CD8-positive, alpha-beta memory T cell (primary cell): ENCODE measurements at regions of chr16 and their contacts with region 1.

Region 1: DNA sequence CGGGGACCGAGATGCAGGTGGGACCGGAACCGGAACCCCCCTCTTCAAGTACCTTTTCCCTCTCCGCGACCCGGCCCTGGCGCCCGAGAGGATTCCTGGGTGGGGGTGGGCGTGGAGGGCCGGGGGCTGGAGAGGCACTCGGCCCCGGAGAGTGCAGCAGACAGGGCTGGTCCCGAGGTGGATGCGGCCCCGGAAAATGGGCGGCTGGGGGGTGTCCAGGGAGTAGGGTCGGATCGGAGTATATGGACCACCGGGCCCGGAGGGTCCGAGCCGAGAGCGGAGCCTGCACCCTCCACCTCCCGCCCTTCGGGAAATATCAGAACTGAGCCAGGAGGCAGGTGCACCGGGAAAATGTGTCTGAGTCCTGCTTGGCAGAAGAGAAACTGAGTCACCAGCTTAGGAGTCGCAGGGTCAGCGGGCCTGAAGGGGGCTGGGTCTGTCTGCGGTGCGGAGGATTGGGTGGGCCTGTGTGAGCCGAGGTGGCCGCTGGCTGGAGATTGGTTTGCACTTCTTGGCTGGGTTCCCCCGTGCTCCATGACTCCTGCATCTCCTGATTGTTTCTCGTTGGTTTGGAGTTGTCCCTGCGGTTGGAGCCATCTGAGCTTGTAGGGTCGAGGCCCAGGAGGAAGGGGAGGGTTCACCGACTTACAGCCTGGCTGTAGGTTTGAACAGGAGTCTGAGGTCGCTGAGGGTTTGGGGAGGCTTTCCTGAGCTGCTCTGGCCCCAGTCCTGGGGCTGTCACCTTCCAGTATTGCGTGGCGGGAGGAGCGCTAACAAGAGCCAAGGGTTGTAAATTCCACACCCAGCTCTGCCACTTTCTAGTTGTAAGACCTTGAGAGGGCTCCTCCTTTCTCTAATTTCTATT is 518 bp downstream of the SH2B1 start:
- DNase-seq: peak in 4 of 5 donors; percentile 22 to 34 (median 28)
- H3K4me3 ChIP-seq: peak overlapping the region; percentile 99
- H3K4me3 Mint-ChIP-seq: peak overlapping the region; percentile 98 to 99 (median 99)
- H3K27ac ChIP-seq: peak overlapping the region; percentile 96
- H3K27ac Mint-ChIP-seq: peak overlapping the region; percentile 93 to 99 (median 98)
- H3K4me1 ChIP-seq: peaks cover 14% of the 10 kb centered on the region
- H3K4me1 Mint-ChIP-seq: peaks cover 22 to 48% (median 23%) of the 10 kb centered on the region in 3 donors
- H3K27me3 ChIP-seq: no peaks in the 10 kb centered on the region
- H3K27me3 Mint-ChIP-seq: peaks cover 0 to 2% of the 10 kb centered on the region in 2 donors

Region 2: DNA sequence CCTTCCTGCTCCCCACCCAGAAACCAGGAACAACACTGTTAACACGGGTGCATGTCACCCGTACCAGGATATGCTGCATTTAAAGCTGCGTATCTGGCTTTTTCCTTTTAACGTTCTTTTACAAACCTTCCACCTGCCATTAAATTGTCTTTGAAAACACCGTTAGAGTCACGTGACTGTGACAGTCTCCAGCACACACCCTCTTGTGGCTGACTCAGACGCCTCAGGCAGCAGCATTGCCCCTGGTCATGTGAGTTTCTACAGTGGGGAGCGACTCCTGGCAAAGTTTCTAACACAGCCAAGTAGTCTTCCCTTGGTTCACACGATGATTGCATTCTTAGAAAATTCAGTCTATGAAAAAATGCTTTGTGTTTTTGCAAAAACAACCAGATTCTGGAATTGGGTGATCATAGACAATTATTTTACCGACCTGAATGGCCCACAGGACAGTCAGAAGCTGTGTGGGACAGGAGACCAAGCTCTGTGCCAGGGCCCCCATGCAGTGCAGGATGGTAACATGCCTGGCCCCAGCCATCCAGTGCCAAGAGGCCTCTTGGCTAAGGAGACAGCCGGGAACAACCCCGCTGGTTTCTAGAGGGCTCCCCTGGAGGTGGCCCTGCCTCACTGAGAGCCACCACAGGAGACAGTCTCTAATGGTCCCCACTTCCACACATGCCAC is 1115.2 kb before region 1 on chr16:
- CTCF ChIA-PET with region 1: no interaction called
- POLR2A ChIA-PET with region 1: no interaction called
- DNase-seq: peak in 1 of 5 donors; percentile 22
- H3K4me3 ChIP-seq: no peak overlapping the region
- H3K4me3 Mint-ChIP-seq: peak overlapping the region in 3 of 7 donors; percentile 5 to 22 (median 9)
- H3K27ac ChIP-seq: no peak overlapping the region
- H3K27ac Mint-ChIP-seq: peak overlapping the region in 2 of 8 donors; percentile 34 to 58
- H3K4me1 ChIP-seq: peaks cover 10% of the 10 kb centered on the region
- H3K4me1 Mint-ChIP-seq: peaks cover 4 to 14% (median 10%) of the 10 kb centered on the region in 3 donors
- H3K27me3 ChIP-seq: no peaks in the 10 kb centered on the region
- H3K27me3 Mint-ChIP-seq: no peaks in the 10 kb centered on the region

Region 3: DNA sequence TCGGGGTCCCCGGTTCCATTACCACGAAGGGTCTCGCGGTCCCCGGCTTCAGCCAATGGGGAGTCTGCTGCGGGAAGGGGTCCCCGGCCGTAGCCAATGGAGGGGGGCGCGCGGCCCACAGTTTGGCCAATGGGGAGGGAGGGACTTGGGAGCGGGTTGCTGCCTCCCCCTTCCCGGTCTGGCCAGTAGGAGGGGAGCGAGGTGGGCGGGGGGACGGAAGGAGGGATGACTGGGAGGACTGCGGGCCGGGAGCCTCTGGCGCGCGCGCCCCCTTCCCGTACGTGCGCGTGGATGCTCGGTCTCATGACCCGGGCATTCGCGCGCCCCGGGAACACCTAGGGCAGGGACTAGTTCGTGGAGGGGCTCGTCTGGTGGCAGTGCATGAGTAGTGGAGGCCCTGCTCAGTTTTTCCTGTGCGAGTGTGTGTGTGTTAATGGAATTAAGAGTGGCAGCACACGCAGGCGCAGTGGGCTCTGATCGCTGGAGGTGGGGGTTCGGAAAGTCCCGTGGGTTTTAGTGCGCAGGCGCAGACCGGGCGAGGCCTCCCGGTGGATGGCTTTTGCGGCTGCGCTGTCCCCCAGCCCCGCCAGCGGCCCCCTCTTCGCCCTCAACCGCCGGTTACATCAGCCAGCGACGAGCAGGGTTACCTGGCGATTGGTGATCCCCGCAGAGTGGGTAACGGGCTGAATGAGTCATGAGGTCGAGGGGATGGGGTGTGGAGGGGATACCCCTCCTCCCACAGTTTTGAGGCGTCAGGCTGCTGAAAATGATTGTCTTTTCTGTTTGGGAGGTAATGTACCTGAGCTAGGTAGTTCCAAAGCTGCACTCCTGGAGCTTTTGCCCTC is 40.1 kb before region 1 on chr16:
- CTCF ChIA-PET with region 1: interaction called, 7 read pairs
- POLR2A ChIA-PET with region 1: interaction called, 14 read pairs
- DNase-seq: peak; percentile 94 to 98 (median 94)
- H3K4me3 ChIP-seq: peak overlapping the region; percentile 94
- H3K4me3 Mint-ChIP-seq: peak overlapping the region; percentile 96 to 99 (median 97)
- H3K27ac ChIP-seq: peak overlapping the region; percentile 96
- H3K27ac Mint-ChIP-seq: peak overlapping the region; percentile 98 to 100 (median 99)
- H3K4me1 ChIP-seq: peaks cover 29% of the 10 kb centered on the region
- H3K4me1 Mint-ChIP-seq: peaks cover 34 to 47% (median 35%) of the 10 kb centered on the region in 3 donors
- H3K27me3 ChIP-seq: no peaks in the 10 kb centered on the region
- H3K27me3 Mint-ChIP-seq: peaks cover 0 to 7% of the 10 kb centered on the region in 2 donors

Region 4: GRCh38 chr16:28846080-28846932 is 17.9 kb before region 1 on chr16 and contains the start of gene TUFM:
- CTCF ChIA-PET with region 1: interaction called, 42 read pairs
- POLR2A ChIA-PET with region 1: interaction called, 28 read pairs
- DNase-seq: peak; percentile 96 to 99 (median 98)
- H3K4me3 ChIP-seq: peak within 1 kb of the TSS; percentile 90
- H3K4me3 Mint-ChIP-seq: peak within 1 kb of the TSS; percentile 90 to 95 (median 94)
- H3K27ac ChIP-seq: peak within 1 kb of the TSS; percentile 89
- H3K27ac Mint-ChIP-seq: peak within 1 kb of the TSS; percentile 84 to 99 (median 94)
- H3K4me1 ChIP-seq: peaks cover 26% of the 10 kb centered on the region
- H3K4me1 Mint-ChIP-seq: peaks cover 28 to 41% (median 30%) of the 10 kb centered on the region in 3 donors
- H3K27me3 ChIP-seq: no peaks in the 10 kb centered on the region
- H3K27me3 Mint-ChIP-seq: no peaks in the 10 kb centered on the region
- total RNA-seq, gene TUFM: 320 to 347 TPM

Region 5: DNA sequence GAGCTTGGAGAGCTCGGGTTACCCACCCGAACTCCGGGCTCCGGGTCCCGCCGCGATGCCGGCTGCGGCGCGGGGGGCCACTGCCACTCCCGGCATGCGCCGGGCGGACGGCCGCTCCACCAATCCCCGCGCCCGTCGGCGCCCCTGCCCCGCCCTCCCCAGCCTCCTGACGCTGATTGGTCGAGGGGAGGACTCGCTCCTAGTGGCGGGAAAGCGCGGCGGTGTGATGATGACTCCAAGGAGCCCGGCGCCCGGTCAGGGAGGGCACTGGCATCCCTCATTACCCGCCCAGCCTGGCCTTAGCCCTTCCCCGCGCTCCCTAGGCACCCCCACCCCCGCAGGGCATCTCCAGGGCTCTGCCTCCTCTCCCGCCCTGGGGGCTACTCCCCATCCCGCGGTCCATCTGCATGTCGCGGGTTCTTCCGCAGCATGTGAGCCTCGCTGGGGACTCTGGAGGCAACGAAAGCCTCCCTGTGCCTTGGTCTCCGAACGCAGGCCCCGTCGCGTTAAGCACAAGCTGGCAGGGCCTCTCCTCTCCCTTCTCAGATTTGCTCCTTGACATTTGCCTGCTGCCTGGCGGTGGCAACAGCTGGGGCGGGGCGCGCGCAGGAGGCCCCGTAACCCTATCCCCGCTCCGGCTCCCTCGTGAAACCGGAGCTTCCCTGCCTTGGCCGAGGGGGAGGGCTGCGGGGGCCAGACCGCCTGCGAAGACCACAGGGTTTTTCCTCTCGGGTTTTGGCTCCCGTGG is 15.9 kb after region 1 on chr16:
- CTCF ChIA-PET with region 1: interaction called, 3 read pairs
- POLR2A ChIA-PET with region 1: interaction called, 15 read pairs
- DNase-seq: peak; percentile 75 to 92 (median 83)
- H3K4me3 ChIP-seq: peak overlapping the region; percentile 87
- H3K4me3 Mint-ChIP-seq: peak overlapping the region; percentile 85 to 95 (median 87)
- H3K27ac ChIP-seq: peak overlapping the region; percentile 61
- H3K27ac Mint-ChIP-seq: peak overlapping the region in 3 of 8 donors; percentile 33 to 55 (median 45)
- H3K4me1 ChIP-seq: peaks cover 14% of the 10 kb centered on the region
- H3K4me1 Mint-ChIP-seq: peaks cover 12 to 18% (median 14%) of the 10 kb centered on the region in 3 donors
- H3K27me3 ChIP-seq: no peaks in the 10 kb centered on the region
- H3K27me3 Mint-ChIP-seq: peaks cover 0 to 2% of the 10 kb centered on the region in 2 donors

Region 6: DNA sequence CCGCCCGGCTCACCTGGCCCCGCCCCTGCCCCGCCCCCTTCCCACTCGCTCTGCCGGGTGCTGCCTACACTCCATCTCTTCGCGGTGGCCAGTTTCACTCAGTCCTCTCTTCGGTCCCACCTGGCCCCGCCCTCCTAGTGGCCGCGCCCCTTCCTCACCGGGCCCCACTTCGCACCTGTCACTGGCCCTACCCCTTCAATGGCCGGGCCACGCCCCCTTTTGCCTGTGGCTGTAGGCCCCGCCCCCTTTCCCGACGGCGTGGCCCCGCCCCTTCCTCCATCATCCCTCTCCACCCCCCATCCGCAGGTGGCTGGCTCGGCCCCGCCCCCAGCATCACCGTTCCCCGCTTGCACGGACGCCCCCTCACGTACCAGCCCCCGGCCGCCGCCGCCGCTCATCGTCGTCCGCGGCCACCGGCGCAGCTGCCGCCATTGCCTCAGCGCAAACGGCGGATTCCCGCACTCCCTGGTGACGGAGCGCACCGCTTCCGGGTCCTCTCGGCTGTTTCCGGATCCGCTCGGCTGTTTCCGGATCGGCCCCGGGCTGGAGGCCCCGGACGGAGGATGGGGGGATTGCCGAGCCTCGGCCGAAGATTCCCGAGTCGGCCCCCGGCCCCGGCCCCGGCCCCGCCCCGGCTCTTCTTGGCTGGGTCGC is 60.7 kb after region 1 on chr16 and contains the start of gene RABEP2:
- CTCF ChIA-PET with region 1: no interaction called
- POLR2A ChIA-PET with region 1: interaction called, 10 read pairs
- DNase-seq: peak; percentile 92 to 96 (median 95)
- H3K4me3 ChIP-seq: peak within 1 kb of the TSS; percentile 86
- H3K4me3 Mint-ChIP-seq: peak within 1 kb of the TSS; percentile 86 to 98 (median 94)
- H3K27ac ChIP-seq: peak within 1 kb of the TSS; percentile 96
- H3K27ac Mint-ChIP-seq: peak within 1 kb of the TSS; percentile 91 to 99 (median 99)
- H3K4me1 ChIP-seq: peaks cover 11% of the 10 kb centered on the region
- H3K4me1 Mint-ChIP-seq: peaks cover 13 to 24% (median 15%) of the 10 kb centered on the region in 3 donors
- H3K27me3 ChIP-seq: no peaks in the 10 kb centered on the region
- H3K27me3 Mint-ChIP-seq: peaks cover 0 to 2% of the 10 kb centered on the region in 2 donors
- total RNA-seq, gene RABEP2: 20.8 to 21.7 TPM

Region 7: GRCh38 chr16:28950648-28951409 is 86.7 kb after region 1 on chr16 and contains the start of gene NFATC2IP:
- CTCF ChIA-PET with region 1: interaction called, 9 read pairs
- POLR2A ChIA-PET with region 1: interaction called, 10 read pairs
- DNase-seq: peak; percentile 99 to 100 (median 99)
- H3K4me3 ChIP-seq: peak within 1 kb of the TSS; percentile 74
- H3K4me3 Mint-ChIP-seq: peak within 1 kb of the TSS; percentile 88 to 98 (median 94)
- H3K27ac ChIP-seq: peak within 1 kb of the TSS; percentile 73
- H3K27ac Mint-ChIP-seq: peak within 1 kb of the TSS; percentile 68 to 97 (median 88)
- H3K4me1 ChIP-seq: peaks cover 18% of the 10 kb centered on the region
- H3K4me1 Mint-ChIP-seq: peaks cover 22 to 42% (median 22%) of the 10 kb centered on the region in 3 donors
- H3K27me3 ChIP-seq: no peaks in the 10 kb centered on the region
- H3K27me3 Mint-ChIP-seq: peaks cover 0 to 4% of the 10 kb centered on the region in 2 donors
- total RNA-seq, gene NFATC2IP: 75.1 to 77.0 TPM